ENCODE measurements at regions of chr1 and their contacts with region 1.

Region 1: GRCh38 chr1:162391790-162392563 is 10.4 kb downstream of the C1orf226 start:
- DNase-seq: peak in 1 of 2 experiments; percentile 40
- H3K4me3 ChIP-seq: no peak overlapping the region
- H3K27ac ChIP-seq: no peak overlapping the region
- H3K4me1 ChIP-seq: peaks cover 0 to 6% (median 1%) of the 10 kb centered on the region in 4 experiments; a peak in 4 of 7 replicates
- H3K27me3 ChIP-seq: no peaks in the 10 kb centered on the region
- CTCF ChIP-seq: peak in 2 of 3 experiments; percentile 63 to 69; a peak in 3 of 4 replicates
- EP300 ChIP-seq: no peak
- POLR2A ChIP-seq: no peak
- RAD21 ChIP-seq: peak; percentile 81 to 83

Region 2: DNA sequence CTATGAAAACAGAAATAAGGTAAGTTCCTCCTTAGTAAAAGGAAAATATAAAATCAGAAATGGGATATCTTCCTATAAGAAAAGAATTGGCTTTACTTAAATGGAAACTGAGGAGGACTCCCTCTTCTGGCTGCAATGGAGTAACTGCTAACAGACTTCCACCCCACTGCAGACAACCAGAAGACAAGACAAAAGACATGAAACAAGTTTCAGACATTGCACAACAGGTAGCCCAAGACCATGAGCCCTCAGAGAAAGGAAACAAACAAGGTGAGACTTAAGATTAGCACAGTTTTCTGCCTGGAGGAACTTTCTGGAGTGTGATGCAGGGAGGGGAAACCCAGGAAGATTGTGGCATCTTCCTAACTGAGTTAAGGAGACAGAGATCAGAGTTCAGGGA is 351.3 kb before region 1 on chr1:
- CTCF ChIA-PET with region 1: interaction called, 19 read pairs
- POLR2A ChIA-PET with region 1: no interaction called
- DNase-seq: no peak
- H3K4me3 ChIP-seq: no peak overlapping the region
- H3K27ac ChIP-seq: no peak overlapping the region
- H3K4me1 ChIP-seq: no peaks in the 10 kb centered on the region; a peak in 1 of 7 replicates
- H3K27me3 ChIP-seq: no peaks in the 10 kb centered on the region
- CTCF ChIP-seq: peak in 2 of 3 experiments; percentile 55 to 74; a peak in 3 of 4 replicates
- EP300 ChIP-seq: no peak
- POLR2A ChIP-seq: no peak
- RAD21 ChIP-seq: peak; percentile 44 to 45; a peak in 3 of 4 replicates

Region 3: DNA sequence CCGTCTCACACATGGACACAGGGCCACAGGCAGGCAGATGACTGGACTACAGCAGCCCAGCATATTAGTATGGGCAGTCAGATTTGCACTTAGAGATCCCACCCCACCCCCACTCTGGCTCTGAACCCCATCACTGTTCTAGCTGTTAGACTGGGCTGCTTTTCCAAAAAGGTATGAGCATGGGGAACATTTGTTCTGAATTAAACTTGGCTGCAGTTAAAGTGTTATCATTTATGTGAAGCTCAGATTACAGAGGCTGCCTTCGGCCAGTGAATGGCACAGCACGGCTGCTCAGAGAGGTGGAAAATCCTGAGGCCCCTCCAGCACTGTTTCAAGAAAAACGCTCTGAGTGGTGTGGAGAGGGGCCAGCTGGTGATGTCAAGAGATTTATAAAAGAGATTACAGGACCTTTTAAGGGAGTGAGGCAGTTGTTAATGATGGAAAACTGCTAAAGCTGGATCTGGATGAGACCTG is 329.4 kb before region 1 on chr1:
- CTCF ChIA-PET with region 1: interaction called, 22 read pairs
- POLR2A ChIA-PET with region 1: interaction called, 3 read pairs
- DNase-seq: no peak
- H3K4me3 ChIP-seq: no peak overlapping the region
- H3K27ac ChIP-seq: no peak overlapping the region
- H3K4me1 ChIP-seq: peaks cover 0 to 7% (median 1%) of the 10 kb centered on the region in 4 experiments; a peak in 3 of 7 replicates
- H3K27me3 ChIP-seq: no peaks in the 10 kb centered on the region
- CTCF ChIP-seq: no peak
- EP300 ChIP-seq: no peak
- POLR2A ChIP-seq: no peak
- RAD21 ChIP-seq: no peak

Region 4: DNA sequence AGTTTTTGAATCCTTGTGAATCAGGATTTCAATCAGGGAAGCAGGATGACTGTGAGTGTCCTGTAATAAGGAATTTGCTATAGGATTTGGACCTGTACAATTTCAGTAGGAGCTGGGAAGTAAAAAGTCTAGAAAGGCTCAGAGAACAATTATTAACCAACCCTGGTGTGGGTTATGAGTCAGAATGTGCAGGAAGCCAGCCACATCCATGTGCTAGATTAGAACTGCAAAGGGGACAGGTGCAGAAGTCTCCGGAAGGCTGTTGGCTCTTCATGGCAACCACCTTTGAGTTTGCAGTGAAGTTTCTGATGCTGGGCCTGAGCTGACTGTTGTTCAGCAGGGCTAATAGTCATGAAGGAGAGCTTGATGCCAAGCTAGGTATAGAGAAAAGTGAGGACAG is 86.0 kb before region 1 on chr1:
- CTCF ChIA-PET with region 1: no interaction called
- POLR2A ChIA-PET with region 1: no interaction called
- DNase-seq: no peak
- H3K4me3 ChIP-seq: no peak overlapping the region
- H3K27ac ChIP-seq: no peak overlapping the region
- H3K4me1 ChIP-seq: peaks cover 0 to 4% (median 0%) of the 10 kb centered on the region in 4 experiments; a peak in 2 of 7 replicates
- H3K27me3 ChIP-seq: no peaks in the 10 kb centered on the region
- CTCF ChIP-seq: no peak
- EP300 ChIP-seq: no peak
- POLR2A ChIP-seq: no peak
- RAD21 ChIP-seq: no peak

Region 5: GRCh38 chr1:162381383-162381782 is 10.6 kb before region 1 on chr1 and contains the start of gene C1orf226:
- CTCF ChIA-PET with region 1: interaction called, 16 read pairs
- POLR2A ChIA-PET with region 1: interaction called, 3 read pairs
- DNase-seq: no peak
- H3K4me3 ChIP-seq: no peak within 1 kb of the TSS
- H3K27ac ChIP-seq: no peak within 1 kb of the TSS
- H3K4me1 ChIP-seq: 0 out of 7 replicates have a peak, but pooled peaks cover 0 to 1% (median 0%) of the 10 kb centered on the region in 4 experiments
- H3K27me3 ChIP-seq: no peaks in the 10 kb centered on the region
- CTCF ChIP-seq: no peak
- EP300 ChIP-seq: no peak
- POLR2A ChIP-seq: no peak
- RAD21 ChIP-seq: no peak
- total RNA-seq, gene C1orf226: 18.8 and 19.5 TPM in 2 replicates